ENCODE measurements at regions of chr4 and their contacts with region 1.

Region 1: GRCh38 chr4:111652236-111652635 is 493.0 kb upstream of the FAM241A start:
- DNase-seq: no peak
- ATAC-seq: no peak
- H3K4me3 ChIP-seq: no peak overlapping the region
- H3K27ac ChIP-seq: no peak overlapping the region
- H3K4me1 ChIP-seq: no peaks in the 10 kb centered on the region
- H3K27me3 ChIP-seq: no peaks in the 10 kb centered on the region
- CTCF ChIP-seq: no peak
- EP300 ChIP-seq: no peak
- POLR2A ChIP-seq: no peak
- RAD21 ChIP-seq: no peak

Region 2: DNA sequence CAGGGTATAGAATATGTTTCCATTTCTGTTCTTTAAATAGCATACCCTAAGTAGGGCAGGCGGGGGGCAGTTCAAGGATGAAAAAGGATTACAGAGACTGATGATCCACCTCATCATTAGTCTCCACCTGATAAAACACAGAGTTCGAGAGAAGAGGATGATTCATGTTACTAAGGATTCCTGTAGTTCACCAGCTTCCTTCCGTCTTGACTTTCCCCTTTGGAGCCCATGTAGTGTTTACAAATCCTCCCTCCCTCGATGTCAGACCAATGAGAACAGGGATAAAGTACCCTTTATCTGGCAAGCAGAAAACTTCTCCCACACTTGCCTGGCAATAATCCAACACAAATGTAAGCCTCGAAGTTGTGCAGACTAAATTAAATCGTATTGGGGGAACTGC is 33.3 kb before region 1 on chr4:
- CTCF ChIA-PET with region 1: no interaction called
- POLR2A ChIA-PET with region 1: no interaction called
- in situ Hi-C with region 1: no loop called
- intact Hi-C with region 1: loop called (anchors 1 kb)
- DNase-seq: no peak
- ATAC-seq: no peak
- H3K4me3 ChIP-seq: no peak overlapping the region
- H3K27ac ChIP-seq: no peak overlapping the region
- H3K4me1 ChIP-seq: no peaks in the 10 kb centered on the region
- H3K27me3 ChIP-seq: no peaks in the 10 kb centered on the region
- CTCF ChIP-seq: no peak
- EP300 ChIP-seq: no peak
- POLR2A ChIP-seq: no peak
- RAD21 ChIP-seq: no peak

Region 3: DNA sequence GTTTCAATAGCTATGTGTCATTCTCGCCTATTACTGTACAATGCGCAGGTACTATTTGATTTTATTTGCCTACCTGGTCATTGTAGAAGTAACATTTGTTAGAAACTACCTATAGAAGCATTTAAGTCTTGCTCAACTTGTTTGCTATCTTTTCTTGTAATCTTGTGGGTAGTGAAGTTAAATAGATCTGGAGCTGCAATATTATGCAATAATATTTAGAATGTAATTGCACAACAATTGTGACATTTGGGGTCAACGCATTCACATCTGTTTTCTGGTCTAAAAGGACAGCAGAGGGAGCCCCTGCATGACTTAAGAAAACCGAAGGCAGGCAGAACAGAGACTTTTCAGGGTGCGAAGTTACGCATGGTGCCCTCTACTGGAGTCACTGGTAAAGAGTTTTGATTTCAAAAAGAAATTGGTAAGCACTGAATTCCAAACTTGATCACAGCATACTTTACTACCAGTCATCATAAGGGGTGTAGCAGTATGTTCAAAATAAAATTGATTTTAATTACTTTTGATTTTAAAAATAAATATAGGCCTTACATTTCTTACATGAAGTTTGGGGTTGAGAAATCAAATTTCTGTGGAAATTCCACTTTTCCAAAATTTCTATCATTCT is 10.2 kb before region 1 on chr4:
- CTCF ChIA-PET with region 1: no interaction called
- POLR2A ChIA-PET with region 1: no interaction called
- in situ Hi-C with region 1: no loop called
- intact Hi-C with region 1: no loop called
- DNase-seq: peak; percentile 87
- ATAC-seq: peak; percentile 97
- H3K4me3 ChIP-seq: no peak overlapping the region
- H3K27ac ChIP-seq: no peak overlapping the region
- H3K4me1 ChIP-seq: no peaks in the 10 kb centered on the region
- H3K27me3 ChIP-seq: no peaks in the 10 kb centered on the region
- CTCF ChIP-seq: peak; percentile 83
- EP300 ChIP-seq: 0 out of 4 replicates have a peak, but pooled peaks of 1 of the 2 experiments have one; percentile 22
- POLR2A ChIP-seq: no peak
- RAD21 ChIP-seq: peak; percentile 71

Measured in HepG2 (cell line).